ENCODE measurements at regions of chr3 and their contacts with region 1.

Region 1: DNA sequence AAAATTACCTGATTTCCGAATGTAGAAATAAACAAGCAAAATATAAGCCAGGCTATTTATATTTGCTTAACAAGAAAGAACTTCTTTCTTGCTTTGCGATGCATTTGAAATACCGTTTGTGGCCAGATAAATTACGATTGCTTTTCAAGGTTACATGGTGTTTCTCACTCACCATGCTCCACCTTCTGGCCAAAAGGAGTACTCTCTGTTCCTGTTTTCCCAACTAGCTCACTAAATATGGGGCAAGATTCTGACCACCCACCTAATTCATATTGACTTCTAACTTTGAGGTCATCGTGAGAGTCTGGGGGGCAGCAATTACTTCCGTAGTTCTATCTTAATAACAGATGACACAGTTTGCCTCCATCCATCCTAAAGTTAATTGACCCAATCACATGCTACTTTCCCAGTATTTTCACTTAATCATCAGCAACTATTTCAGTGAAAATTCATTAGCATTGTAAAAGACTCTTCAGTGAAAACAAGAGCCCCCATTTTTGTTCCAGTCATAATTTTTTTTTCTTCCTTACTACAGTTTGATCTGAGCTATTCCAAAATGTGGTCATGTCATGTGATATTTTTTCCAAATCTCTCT is 25.9 kb downstream of the ACP3 start:
- DNase-seq: peak; percentile 24
- H3K4me3 ChIP-seq: no peak overlapping the region
- H3K27ac ChIP-seq: no peak overlapping the region
- H3K27me3 ChIP-seq: peaks cover 3% of the 10 kb centered on the region
- CTCF ChIP-seq: peak; percentile 93

Region 2: GRCh38 chr3:131705558-131706051 is 637.5 kb before region 1 on chr3:
- CTCF ChIA-PET with region 1: no interaction called
- POLR2A ChIA-PET with region 1: no interaction called
- DNase-seq: no peak
- H3K4me3 ChIP-seq: no peak overlapping the region
- H3K27ac ChIP-seq: no peak overlapping the region
- H3K27me3 ChIP-seq: no peaks in the 10 kb centered on the region
- CTCF ChIP-seq: no peak

Region 3: DNA sequence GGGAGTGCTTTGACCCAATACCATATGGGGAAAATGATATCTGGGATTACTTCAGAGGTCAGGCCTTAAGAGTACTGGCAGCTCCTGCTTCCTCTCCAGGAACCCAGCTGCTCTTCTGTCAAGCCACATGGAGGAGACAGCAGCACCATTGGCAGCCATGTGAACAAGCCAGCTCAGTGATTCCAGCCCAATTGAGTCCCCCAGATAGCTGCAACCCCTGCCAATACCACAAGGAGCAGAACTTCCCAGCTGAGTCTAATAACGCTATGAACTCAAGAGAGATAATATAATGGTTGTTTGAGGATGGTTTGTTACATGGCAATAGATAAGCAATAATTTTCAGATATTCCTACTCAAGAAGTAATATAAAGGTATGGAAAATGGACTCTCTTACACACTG is 181.5 kb before region 1 on chr3:
- CTCF ChIA-PET with region 1: no interaction called
- POLR2A ChIA-PET with region 1: no interaction called
- DNase-seq: no peak
- H3K4me3 ChIP-seq: no peak overlapping the region
- H3K27ac ChIP-seq: no peak overlapping the region
- H3K27me3 ChIP-seq: no peaks in the 10 kb centered on the region
- CTCF ChIP-seq: no peak

Region 4: DNA sequence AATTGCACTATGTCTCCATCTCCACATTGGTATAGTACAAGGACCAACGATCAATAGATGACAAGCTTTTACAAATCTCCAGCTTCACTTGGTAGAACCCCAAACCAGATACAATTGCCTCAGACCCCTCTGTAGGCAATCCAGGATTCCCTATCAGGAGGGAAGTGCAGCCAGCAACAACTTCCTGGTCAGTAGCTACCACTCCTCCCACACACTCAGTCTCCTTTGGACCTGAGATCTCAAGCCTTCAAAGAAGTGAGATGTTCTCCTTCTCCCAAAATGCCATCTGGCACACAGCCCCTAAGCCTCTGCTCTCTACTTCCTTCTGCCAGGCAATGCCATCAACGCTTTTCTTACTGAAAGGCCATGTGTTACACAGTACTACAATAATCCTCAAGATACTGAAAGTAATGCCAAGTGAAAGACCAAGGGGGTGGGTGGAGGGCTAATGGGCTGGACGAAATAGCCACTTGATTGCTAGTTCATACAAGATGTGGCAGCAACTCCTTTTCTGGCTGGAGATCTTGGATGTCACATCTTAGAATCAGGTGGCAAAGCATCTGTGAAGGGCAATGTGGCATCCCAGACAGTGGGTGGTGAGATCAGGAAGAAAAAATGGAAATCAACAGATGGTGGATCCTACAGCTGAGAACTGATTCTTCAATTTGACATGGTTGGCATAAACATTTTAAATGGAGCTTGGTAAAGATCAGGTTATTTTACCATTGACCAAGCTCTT is 101.2 kb before region 1 on chr3:
- CTCF ChIA-PET with region 1: interaction called, 128 read pairs
- POLR2A ChIA-PET with region 1: no interaction called
- DNase-seq: no peak
- H3K4me3 ChIP-seq: no peak overlapping the region
- H3K27ac ChIP-seq: no peak overlapping the region
- H3K27me3 ChIP-seq: peaks cover 8% of the 10 kb centered on the region
- CTCF ChIP-seq: no peak

Region 5: GRCh38 chr3:132261506-132261905 is 81.6 kb before region 1 on chr3:
- CTCF ChIA-PET with region 1: interaction called, 165 read pairs
- POLR2A ChIA-PET with region 1: no interaction called
- DNase-seq: no peak
- H3K4me3 ChIP-seq: no peak overlapping the region
- H3K27ac ChIP-seq: no peak overlapping the region
- H3K27me3 ChIP-seq: no peaks in the 10 kb centered on the region
- CTCF ChIP-seq: no peak

Region 6: GRCh38 chr3:132290833-132291232 is 52.3 kb before region 1 on chr3:
- CTCF ChIA-PET with region 1: interaction called, 15 read pairs
- POLR2A ChIA-PET with region 1: no interaction called
- DNase-seq: no peak
- H3K4me3 ChIP-seq: no peak overlapping the region
- H3K27ac ChIP-seq: no peak overlapping the region
- H3K27me3 ChIP-seq: no peaks in the 10 kb centered on the region
- CTCF ChIP-seq: no peak

Region 7: DNA sequence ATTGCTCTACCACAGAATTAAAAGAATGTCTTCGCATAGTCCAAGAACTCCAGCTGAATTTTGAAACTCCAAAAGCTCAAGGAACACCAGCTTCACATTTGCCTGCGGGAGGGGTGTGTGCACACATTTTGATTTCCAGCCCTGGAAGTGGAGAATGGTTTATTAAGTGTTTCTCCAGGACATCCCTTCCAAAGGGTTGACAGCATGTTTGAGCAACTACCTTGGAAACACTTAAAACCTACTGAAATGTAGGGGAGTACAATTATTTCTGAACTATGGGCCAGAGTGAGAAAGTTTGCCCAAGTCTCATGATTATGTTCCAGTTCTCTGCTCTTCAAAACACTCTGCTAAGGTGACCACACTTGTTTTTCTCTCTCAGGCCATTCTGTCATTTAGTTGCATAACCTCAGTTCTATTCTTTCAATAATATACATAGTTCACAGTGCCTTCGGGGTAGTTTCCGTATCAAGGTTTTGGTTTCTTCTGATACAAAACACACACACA is 18.0 kb before region 1 on chr3:
- CTCF ChIA-PET with region 1: interaction called, 34 read pairs
- POLR2A ChIA-PET with region 1: no interaction called
- DNase-seq: no peak
- H3K4me3 ChIP-seq: no peak overlapping the region
- H3K27ac ChIP-seq: no peak overlapping the region
- H3K27me3 ChIP-seq: no peaks in the 10 kb centered on the region
- CTCF ChIP-seq: no peak

Region 8: GRCh38 chr3:132399054-132399929 is 56.2 kb after region 1 on chr3:
- CTCF ChIA-PET with region 1: interaction called, 139 read pairs
- POLR2A ChIA-PET with region 1: no interaction called
- DNase-seq: peak; percentile 42
- H3K4me3 ChIP-seq: no peak overlapping the region
- H3K27ac ChIP-seq: no peak overlapping the region
- H3K27me3 ChIP-seq: no peaks in the 10 kb centered on the region
- CTCF ChIP-seq: peak; percentile 90

Measured in AG04450 (cell line).